ENCODE measurements at regions of chr10 and their contacts with region 1.

Region 1: GRCh38 chr10:129063877-129064276 is 403.2 kb upstream of the MGMT start:
- DNase-seq: no peak
- H3K4me3 ChIP-seq: no peak overlapping the region
- H3K4me3 Mint-ChIP-seq: peak overlapping the region in 1 of 8 donors; percentile 20
- H3K27ac ChIP-seq: no peak overlapping the region
- H3K27ac Mint-ChIP-seq: no peak overlapping the region
- H3K4me1 ChIP-seq: peaks cover 10% of the 10 kb centered on the region
- H3K4me1 Mint-ChIP-seq: peaks cover 0 to 12% (median 4%) of the 10 kb centered on the region in 4 donors
- H3K27me3 ChIP-seq: no peaks in the 10 kb centered on the region
- H3K27me3 Mint-ChIP-seq: no peaks in the 10 kb centered on the region

Region 2: DNA sequence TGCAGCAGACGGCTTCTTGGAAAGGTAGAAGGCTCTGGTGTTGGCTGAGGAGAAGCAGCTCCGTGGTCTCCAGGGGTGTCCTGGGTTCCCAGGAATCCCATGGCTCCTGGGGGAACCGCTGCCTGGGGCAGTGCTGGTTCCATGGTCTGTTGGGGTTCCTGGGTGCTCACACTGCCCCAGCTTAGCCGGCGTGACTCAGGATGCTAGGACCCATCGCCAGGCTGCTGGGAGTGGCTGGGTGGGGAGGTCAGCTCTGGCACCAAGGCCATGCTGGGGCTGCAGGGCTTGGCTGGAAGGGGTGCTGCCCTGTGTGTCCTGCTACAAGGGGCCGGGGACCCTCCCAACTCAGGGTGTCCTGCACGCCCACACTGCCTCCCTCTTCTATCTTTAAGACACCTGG is 412.6 kb after region 1 on chr10:
- CTCF ChIA-PET with region 1: no interaction called
- POLR2A ChIA-PET with region 1: no interaction called
- intact Hi-C with region 1: loop called (anchors 5 kb)
- DNase-seq: no peak
- H3K4me3 ChIP-seq: no peak overlapping the region
- H3K4me3 Mint-ChIP-seq: no peak overlapping the region
- H3K27ac ChIP-seq: no peak overlapping the region
- H3K27ac Mint-ChIP-seq: no peak overlapping the region
- H3K4me1 ChIP-seq: no peaks in the 10 kb centered on the region
- H3K4me1 Mint-ChIP-seq: peaks cover 6 to 21% (median 12%) of the 10 kb centered on the region in 4 donors
- H3K27me3 ChIP-seq: no peaks in the 10 kb centered on the region
- H3K27me3 Mint-ChIP-seq: no peaks in the 10 kb centered on the region

Measured in CD4-positive, alpha-beta memory T cell (primary cell).